HepG2 (cell line): ENCODE measurements at regions of chr18 and their contacts with region 1.

Region 1: GRCh38 chr18:3688699-3689098 is 238.7 kb downstream of the TGIF1 start:
- DNase-seq: no peak
- ATAC-seq: no peak
- H3K4me3 ChIP-seq: no peak overlapping the region
- H3K27ac ChIP-seq: no peak overlapping the region
- H3K4me1 ChIP-seq: peaks cover 25% of the 10 kb centered on the region
- H3K27me3 ChIP-seq: no peaks in the 10 kb centered on the region; a peak in 1 of 5 replicates
- CTCF ChIP-seq: no peak
- EP300 ChIP-seq: no peak
- POLR2A ChIP-seq: no peak
- RAD21 ChIP-seq: no peak

Region 2: GRCh38 chr18:3297025-3297984 is 391.4 kb before region 1 on chr18:
- CTCF ChIA-PET with region 1: no interaction called
- POLR2A ChIA-PET with region 1: no interaction called
- in situ Hi-C with region 1: no loop called
- intact Hi-C with region 1: loop called (anchors 5 kb)
- DNase-seq: peak; percentile 91
- ATAC-seq: peak; percentile 97
- H3K4me3 ChIP-seq: peak overlapping the region; percentile 77 to 91 (median 80)
- H3K27ac ChIP-seq: peak overlapping the region; percentile 58
- H3K4me1 ChIP-seq: peaks cover 11% of the 10 kb centered on the region; the same call in 1 of the 2 replicates
- H3K27me3 ChIP-seq: no peaks in the 10 kb centered on the region; a peak in 1 of 5 replicates
- CTCF ChIP-seq: peak; percentile 97
- EP300 ChIP-seq: peak in 1 of 2 experiments; percentile 52; a peak in 2 of 4 replicates
- POLR2A ChIP-seq: peak; percentile 76 to 89
- RAD21 ChIP-seq: peak; percentile 25